Mammary epithelial cell (primary cell): ENCODE measurements at regions of chr15 and their contacts with region 1.

Region 1: DNA sequence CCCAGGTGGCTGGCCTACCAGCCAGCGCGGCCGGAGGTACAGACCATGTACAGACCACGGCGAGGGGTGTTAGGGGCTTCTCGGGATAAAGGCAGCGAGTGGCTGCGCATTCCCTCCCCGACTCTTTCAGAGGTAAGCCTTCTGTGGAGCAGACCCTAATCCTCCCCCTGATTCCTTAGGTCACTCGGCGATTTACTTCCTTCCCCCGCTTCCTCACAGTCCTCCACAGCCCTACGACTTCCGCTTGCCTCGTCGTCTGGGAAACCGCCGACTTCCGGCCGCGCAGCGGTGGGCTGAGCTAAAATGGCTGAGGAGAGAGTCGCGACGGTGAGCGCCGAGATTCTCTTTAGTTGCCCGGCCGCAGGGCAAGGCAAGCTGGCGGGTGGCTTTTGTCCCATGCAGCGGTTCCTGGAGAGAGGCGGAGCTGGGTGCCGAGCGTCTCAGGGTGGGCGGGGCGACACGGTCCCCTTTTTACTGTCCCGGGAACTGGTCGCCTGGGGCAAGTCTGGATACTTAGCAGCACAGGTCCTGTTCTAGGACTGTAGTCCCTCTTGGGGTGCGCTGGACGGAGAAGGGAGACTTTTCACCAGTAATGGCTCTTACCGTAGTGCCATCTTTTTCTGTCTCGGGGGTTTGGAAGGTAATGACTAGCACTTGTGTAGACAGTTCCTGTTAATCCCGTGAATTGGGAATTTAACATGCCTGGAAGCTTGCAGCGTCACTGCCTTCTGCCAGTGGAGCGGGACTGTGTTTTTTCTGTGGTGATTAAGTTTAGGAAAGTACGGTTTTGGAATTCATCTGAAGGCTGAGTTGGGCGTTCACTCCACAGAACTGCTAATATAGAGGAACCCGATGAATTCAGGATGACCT is at the starts of genes BBS4 and HIGD2B:
- DNase-seq: peak; percentile 89
- H3K4me3 ChIP-seq: peak within 1 kb of the TSS; percentile 64 to 83 (median 75)
- H3K27ac ChIP-seq: peak within 1 kb of the TSS; percentile 82
- H3K4me1 ChIP-seq: peaks cover 5% of the 10 kb centered on the region
- H3K27me3 ChIP-seq: no peaks in the 10 kb centered on the region
- CTCF ChIP-seq: no peak
- total RNA-seq, gene BBS4: 12.9 to 19.2 TPM
- total RNA-seq, gene HIGD2B: not detected

Region 2: GRCh38 chr15:72319985-72320671 is 366.0 kb before region 1 on chr15 and contains the start of gene CELF6:
- CTCF ChIA-PET with region 1: no interaction called
- dilution Hi-C with region 1: no loop called
- in situ Hi-C with region 1: no loop called
- intact Hi-C with region 1: loop called (anchors 5 kb)
- DNase-seq: peak; percentile 73
- H3K4me3 ChIP-seq: peak within 1 kb of the TSS; percentile 9 to 63 (median 61)
- H3K27ac ChIP-seq: no peak within 1 kb of the TSS
- H3K4me1 ChIP-seq: peaks cover 10% of the 10 kb centered on the region
- H3K27me3 ChIP-seq: no peaks in the 10 kb centered on the region
- CTCF ChIP-seq: no peak
- total RNA-seq, gene CELF6: 0.14 to 0.17 TPM